Ovary (tissue), 10 donors: ENCODE measurements at regions of chr9 and their contacts with region 1.

Region 1: GRCh38 chr9:89602978-89603766 is 1.6 kb upstream of the GADD45G start:
- DNase-seq: peak; percentile 86 to 95 (median 93)
- H3K4me3 ChIP-seq: peak overlapping the region; percentile 74
- H3K27ac ChIP-seq: peak overlapping the region in 1 of 2 donors; percentile 28
- H3K4me1 ChIP-seq: peaks cover 6% of the 10 kb centered on the region
- H3K27me3 ChIP-seq: no peaks in the 10 kb centered on the region
- CTCF ChIP-seq: peak; percentile 60 to 85 (median 66)
- EP300 ChIP-seq: no peak
- POLR2A ChIP-seq: no peak

Region 2: GRCh38 chr9:89096807-89097206 is 506.4 kb before region 1 on chr9:
- intact Hi-C with region 1: no loop called
- DNase-seq: no peak
- H3K4me3 ChIP-seq: no peak overlapping the region
- H3K27ac ChIP-seq: no peak overlapping the region
- H3K4me1 ChIP-seq: peaks cover 4% of the 10 kb centered on the region
- H3K27me3 ChIP-seq: no peaks in the 10 kb centered on the region
- CTCF ChIP-seq: no peak
- EP300 ChIP-seq: no peak
- POLR2A ChIP-seq: no peak

Region 3: DNA sequence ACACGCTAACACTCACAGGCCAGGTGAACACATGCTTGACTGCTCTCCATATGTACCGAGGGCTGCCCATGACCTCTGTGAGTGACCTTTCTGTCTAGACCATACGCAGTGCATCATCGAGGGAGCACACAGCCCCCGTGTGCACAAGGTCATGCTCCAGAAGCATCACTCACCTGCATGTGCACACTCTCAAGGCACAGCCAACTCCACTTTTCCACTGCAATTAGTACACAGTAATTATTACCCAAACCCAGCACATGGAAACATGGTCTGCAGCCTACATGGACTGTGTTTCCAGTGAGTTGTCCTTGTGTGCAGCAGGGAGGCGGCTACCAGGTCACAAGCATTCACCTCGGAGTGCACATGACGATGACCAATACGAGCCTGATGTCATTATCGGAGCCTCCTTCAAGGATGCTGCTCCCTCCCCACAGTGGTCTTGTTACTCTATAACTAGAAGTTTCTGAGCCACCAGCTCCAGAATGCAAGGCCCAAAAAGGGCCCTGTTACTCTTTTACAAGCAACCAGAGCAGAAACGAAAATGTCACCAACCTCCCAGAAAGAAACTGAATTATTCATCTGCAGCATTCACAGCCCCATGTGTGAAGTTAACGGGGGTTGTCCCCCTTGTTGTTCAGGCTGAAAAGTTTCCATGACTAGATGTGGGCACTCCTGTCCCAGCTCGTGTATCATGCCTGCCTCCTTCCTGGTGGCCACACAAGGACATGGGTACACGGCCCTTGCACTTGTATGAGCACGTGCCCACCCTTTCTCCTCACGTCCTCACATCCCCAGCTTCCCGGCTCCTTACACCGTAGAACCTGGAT is 136.5 kb before region 1 on chr9:
- intact Hi-C with region 1: no loop called
- DNase-seq: no peak
- H3K4me3 ChIP-seq: no peak overlapping the region
- H3K27ac ChIP-seq: no peak overlapping the region
- H3K4me1 ChIP-seq: no peaks in the 10 kb centered on the region
- H3K27me3 ChIP-seq: no peaks in the 10 kb centered on the region
- CTCF ChIP-seq: no peak
- EP300 ChIP-seq: no peak
- POLR2A ChIP-seq: no peak

Region 4: GRCh38 chr9:89661956-89662717 is 59.0 kb after region 1 on chr9:
- intact Hi-C with region 1: loop called in 2 of 4 experiments (anchors 10 kb)
- DNase-seq: peak; percentile 98 to 99 (median 99)
- H3K4me3 ChIP-seq: peak overlapping the region; percentile 20
- H3K27ac ChIP-seq: peak overlapping the region in 1 of 2 donors; percentile 60
- H3K4me1 ChIP-seq: peaks cover 9% of the 10 kb centered on the region
- H3K27me3 ChIP-seq: no peaks in the 10 kb centered on the region
- CTCF ChIP-seq: no peak
- EP300 ChIP-seq: no peak
- POLR2A ChIP-seq: no peak

Region 5: GRCh38 chr9:89808076-89808755 is 205.0 kb after region 1 on chr9:
- intact Hi-C with region 1: loop called in 2 of 4 experiments (anchors 10 kb)
- DNase-seq: peak in 3 of 5 donors; percentile 28 to 49 (median 41)
- H3K4me3 ChIP-seq: no peak overlapping the region
- H3K27ac ChIP-seq: peak overlapping the region in 1 of 2 donors; percentile 25
- H3K4me1 ChIP-seq: peaks cover 6% of the 10 kb centered on the region
- H3K27me3 ChIP-seq: no peaks in the 10 kb centered on the region
- CTCF ChIP-seq: peak in 2 of 3 donors; percentile 11 to 44
- EP300 ChIP-seq: no peak
- POLR2A ChIP-seq: no peak

Region 6: DNA sequence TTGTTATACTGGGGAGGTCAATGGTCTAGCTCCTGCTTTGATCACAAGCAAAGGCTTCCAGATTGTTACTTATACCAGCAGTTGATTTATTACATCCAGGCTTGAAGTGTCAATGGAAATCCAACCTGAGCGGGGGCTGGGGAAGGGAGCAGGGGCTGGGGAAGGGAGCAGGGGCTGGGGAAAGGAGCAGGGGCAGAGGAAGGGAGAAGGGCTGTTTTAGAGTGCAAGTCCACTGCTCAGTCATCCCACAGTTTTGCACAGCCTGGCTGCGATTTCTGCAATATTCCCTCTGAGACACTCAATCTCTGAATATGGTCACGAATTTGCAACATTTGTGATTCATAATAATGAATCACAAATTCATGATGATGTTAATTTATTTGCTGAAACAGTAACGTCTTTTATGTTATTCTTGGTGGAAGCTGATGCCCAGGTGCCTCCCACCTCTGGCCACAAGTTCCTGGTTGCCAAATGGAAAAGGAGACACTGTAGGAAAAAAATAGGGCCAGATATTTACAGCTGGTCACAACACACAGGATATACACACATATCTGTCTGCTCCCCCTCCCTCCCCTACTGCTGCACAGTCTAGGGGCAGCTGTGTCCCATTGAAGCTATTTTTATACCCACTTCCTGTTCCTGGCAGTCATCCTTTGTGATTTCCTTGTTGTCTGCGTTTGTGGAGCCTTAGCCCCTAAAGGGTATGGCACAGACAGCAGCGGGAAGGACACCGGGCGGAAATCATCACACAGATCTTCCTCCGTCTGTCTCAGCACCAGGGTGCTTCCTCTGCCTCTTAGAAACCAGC is 326.7 kb after region 1 on chr9:
- intact Hi-C with region 1: loop called in 3 of 4 experiments (anchors 10 kb)
- DNase-seq: no peak
- H3K4me3 ChIP-seq: no peak overlapping the region
- H3K27ac ChIP-seq: no peak overlapping the region
- H3K4me1 ChIP-seq: peaks cover 3% of the 10 kb centered on the region
- H3K27me3 ChIP-seq: no peaks in the 10 kb centered on the region
- CTCF ChIP-seq: no peak
- EP300 ChIP-seq: no peak
- POLR2A ChIP-seq: no peak

Region 7: DNA sequence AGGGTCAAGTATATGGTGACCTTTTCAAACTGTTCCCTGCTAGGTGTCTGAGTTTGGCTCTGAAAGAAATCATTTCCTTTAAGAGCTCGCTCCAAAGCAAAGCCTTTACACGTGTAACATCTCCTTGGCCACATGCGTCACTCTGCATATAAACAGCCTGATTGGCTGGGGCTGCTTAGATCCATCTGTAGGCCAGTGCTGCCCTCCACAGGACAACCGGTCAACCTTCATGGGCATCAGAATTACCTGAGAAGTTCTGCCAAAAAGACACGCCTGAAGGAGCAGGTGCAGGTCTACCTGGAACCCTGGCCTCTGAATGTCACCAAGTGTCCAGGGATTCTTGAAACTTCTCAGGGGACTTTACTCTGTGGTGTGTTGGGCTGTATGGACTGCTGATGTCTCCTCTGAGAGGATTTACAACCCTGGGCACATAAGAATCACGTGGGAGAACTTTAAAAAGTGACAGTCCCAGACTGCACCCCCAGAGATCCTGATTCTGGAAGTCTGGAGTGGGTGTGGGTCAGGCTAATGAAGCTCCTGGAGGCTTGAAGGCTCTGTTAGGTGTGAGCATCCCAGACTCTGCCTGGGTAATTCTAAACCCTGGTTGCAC is 499.2 kb after region 1 on chr9:
- intact Hi-C with region 1: loop called (anchors 2 kb)
- DNase-seq: peak; percentile 79 to 88 (median 87)
- H3K4me3 ChIP-seq: no peak overlapping the region
- H3K27ac ChIP-seq: no peak overlapping the region
- H3K4me1 ChIP-seq: peaks cover 3% of the 10 kb centered on the region
- H3K27me3 ChIP-seq: no peaks in the 10 kb centered on the region
- CTCF ChIP-seq: peak; percentile 63 to 92 (median 85)
- EP300 ChIP-seq: no peak
- POLR2A ChIP-seq: no peak